Mammary epithelial cell (primary cell): ENCODE measurements at regions of chr16 and their contacts with region 1.

Region 1: DNA sequence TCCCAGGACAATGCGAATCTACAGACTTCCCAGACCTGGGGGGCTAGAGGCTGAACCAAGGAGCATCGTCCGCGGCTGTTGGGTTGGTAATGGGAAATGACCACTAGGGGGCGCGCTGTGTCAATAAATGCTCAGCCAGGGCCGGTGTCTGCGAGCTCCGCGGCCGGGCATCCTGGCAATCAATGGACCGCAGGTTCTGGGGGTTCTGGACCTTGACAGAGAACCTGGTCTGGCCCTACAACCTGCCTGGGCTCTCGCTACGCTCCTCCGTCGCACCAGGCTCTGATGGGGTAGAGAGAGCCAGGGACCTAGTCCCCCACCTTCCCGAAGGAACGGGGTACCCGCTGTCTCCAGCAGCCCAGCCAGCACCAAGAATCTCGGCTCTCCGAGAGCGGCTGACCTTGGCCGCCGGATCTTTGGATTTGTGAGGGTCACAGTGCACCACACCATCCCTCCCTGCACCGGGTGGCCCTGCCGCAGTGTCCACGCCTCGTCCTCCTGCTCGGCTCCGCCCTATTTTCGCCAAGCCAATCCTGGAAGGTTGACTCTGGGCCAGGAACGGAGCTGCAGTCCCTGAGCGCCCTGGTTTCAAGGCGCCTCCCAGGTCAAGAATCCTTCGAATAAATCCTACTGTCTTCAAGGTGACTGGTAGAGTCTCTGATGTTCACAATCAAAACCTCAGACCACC is 20.4 kb upstream of the BEAN1 start:
- DNase-seq: peak; percentile 68
- H3K4me3 ChIP-seq: peak overlapping the region; percentile 40 to 60 (median 58)
- H3K27ac ChIP-seq: peak overlapping the region; percentile 98
- H3K4me1 ChIP-seq: peaks cover 23% of the 10 kb centered on the region
- H3K27me3 ChIP-seq: no peaks in the 10 kb centered on the region
- CTCF ChIP-seq: peak; percentile 82 to 83

Region 2: GRCh38 chr16:66357153-66357928 is 49.3 kb before region 1 on chr16:
- CTCF ChIA-PET with region 1: no interaction called
- dilution Hi-C with region 1: no loop called
- in situ Hi-C with region 1: no loop called
- intact Hi-C with region 1: loop called (anchors 2 kb)
- DNase-seq: peak; percentile 74
- H3K4me3 ChIP-seq: no peak overlapping the region
- H3K27ac ChIP-seq: no peak overlapping the region
- H3K4me1 ChIP-seq: peaks cover 11% of the 10 kb centered on the region
- H3K27me3 ChIP-seq: peaks cover 3% of the 10 kb centered on the region
- CTCF ChIP-seq: peak; percentile 72 to 82

Region 3: DNA sequence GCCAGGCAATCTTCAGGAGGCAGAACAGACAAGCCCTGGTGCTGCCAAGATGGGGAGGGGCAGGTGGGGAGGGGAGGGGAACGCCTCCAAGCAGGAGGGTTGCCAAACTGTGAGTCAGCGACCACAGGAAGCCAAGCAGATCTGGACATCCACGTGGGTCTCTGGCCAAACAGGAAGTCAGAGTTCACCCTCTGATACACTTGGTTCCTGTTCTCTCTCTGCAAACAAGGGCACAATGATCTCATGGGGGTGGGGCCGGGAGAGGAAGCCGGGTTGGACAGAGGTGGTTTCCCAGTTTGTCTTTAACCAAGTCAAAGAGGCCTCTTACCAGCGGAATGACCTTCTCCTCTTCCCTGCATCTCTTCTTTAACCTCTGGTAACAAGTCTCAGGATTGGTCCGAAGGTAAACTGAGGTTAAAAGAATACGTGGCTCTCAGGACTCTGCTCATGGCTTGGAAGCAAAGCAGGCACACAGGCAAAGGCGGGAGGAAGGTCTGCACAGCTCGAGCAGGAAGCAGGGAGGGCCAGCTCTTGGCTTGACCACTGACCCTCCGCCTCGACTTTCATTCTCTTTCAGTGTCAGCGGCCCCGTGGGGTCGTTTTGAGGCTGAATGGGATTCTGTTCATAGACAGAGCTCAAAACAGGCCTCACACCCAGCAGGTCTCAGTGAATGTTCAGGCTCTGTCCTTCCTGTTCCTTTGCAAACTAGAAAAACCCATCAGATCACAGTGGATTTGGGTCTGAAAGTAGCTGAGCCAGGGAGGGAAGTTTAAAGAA is 110.3 kb after region 1 on chr16:
- CTCF ChIA-PET with region 1: interaction called, 5 read pairs
- dilution Hi-C with region 1: no loop called
- in situ Hi-C with region 1: no loop called
- intact Hi-C with region 1: loop called (anchors 1 kb)
- DNase-seq: peak; percentile 97
- H3K4me3 ChIP-seq: no peak overlapping the region
- H3K27ac ChIP-seq: peak overlapping the region; percentile 72
- H3K4me1 ChIP-seq: peaks cover 63% of the 10 kb centered on the region
- H3K27me3 ChIP-seq: no peaks in the 10 kb centered on the region
- CTCF ChIP-seq: no peak

Region 4: GRCh38 chr16:66580605-66581209 is 174.0 kb after region 1 on chr16:
- CTCF ChIA-PET with region 1: no interaction called
- dilution Hi-C with region 1: loop called (anchors 5 kb)
- in situ Hi-C with region 1: no loop called
- intact Hi-C with region 1: loop called (anchors 2 kb)
- DNase-seq: peak; percentile 64
- H3K4me3 ChIP-seq: no peak overlapping the region
- H3K27ac ChIP-seq: no peak overlapping the region
- H3K4me1 ChIP-seq: peaks cover 21% of the 10 kb centered on the region
- H3K27me3 ChIP-seq: no peaks in the 10 kb centered on the region
- CTCF ChIP-seq: peak; percentile 23 to 35

Region 5: DNA sequence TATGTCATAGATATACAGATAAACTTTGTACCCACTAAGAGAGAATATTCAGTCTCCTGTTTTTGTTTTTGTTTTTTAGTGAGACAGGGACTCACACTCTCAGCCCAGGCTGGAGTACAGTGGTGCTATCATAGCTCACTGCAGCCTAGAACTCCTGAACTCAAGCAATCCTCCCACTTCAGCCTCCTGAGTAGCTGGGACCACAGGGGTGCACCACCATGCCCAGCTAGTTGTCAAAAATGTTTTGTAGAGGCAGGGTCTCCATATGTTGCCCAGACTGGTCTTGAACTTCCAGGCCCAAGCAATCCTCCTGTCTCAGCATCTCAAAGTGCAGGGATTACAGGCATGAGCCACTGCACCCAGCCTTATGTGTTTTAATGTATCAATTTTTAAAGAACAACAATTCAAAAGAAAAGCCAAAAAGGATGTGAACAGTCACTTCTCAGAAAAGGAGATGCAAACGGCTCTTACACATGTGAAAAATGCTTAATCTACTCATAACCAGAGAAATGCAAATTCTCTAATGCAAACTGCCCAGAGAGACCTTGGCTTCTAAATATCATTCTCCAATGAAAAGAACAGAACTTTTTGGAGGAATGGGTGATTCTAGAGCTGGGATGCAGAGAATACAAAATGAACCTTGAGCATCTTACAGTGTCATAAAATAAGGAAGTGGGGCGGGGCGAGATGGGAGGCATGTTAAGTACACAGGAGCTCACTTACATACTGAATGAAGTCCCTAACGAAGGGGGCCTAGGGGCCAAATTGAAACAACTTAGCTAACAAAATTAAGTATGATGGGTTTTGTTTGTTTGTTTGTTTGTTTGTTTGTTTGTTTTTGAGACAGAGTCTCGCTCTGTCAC is 190.5 kb after region 1 on chr16:
- CTCF ChIA-PET with region 1: no interaction called
- dilution Hi-C with region 1: no loop called
- in situ Hi-C with region 1: loop called (anchors 5 to 10 kb)
- intact Hi-C with region 1: no loop called
- DNase-seq: no peak
- H3K4me3 ChIP-seq: no peak overlapping the region
- H3K27ac ChIP-seq: no peak overlapping the region
- H3K4me1 ChIP-seq: no peaks in the 10 kb centered on the region
- H3K27me3 ChIP-seq: no peaks in the 10 kb centered on the region
- CTCF ChIP-seq: no peak

Region 6: GRCh38 chr16:66660422-66661209 is 253.9 kb after region 1 on chr16:
- CTCF ChIA-PET with region 1: no interaction called
- dilution Hi-C with region 1: no loop called
- in situ Hi-C with region 1: no loop called
- intact Hi-C with region 1: loop called (anchors 5 kb)
- DNase-seq: peak; percentile 85
- H3K4me3 ChIP-seq: no peak overlapping the region
- H3K27ac ChIP-seq: peak overlapping the region; percentile 74
- H3K4me1 ChIP-seq: peaks cover 42% of the 10 kb centered on the region
- H3K27me3 ChIP-seq: no peaks in the 10 kb centered on the region
- CTCF ChIP-seq: peak in 1 of 2 donors; percentile 39

Region 7: DNA sequence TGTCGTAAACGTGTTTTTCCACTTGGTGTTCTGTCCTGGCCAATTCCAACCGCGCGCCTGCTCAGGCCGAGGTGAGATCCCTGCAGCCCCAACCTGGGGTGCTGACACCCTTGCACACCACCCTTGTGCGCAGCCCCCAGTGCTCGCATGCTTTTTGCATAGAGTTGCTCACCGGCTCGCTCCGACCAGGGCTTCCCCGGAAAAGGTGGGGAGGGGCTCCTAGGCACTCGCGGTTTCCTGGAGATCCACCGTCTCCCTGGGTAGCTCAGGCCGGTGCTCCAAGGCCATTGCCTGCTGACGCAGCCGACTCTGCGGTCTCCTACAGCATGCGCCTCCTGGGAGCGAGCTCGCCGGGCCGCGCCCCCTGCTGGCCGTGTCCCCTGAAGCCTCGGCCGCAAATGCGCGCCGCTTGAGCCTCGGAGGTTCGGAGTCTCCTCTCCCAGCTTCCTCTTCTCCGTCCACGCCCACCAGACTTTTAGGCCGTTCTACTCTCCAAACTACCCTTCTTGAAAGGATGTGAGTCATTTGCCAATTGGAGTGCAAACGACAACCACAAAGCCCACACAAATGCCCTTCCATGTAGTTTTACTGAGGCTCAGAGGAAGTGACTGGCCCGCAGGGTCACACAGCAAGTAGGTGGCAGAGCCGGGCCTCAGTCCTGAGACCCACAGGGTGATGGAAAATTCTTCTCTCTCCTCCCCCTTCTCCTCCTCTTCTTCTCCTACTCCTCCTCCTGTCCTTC is 466.4 kb after region 1 on chr16:
- CTCF ChIA-PET with region 1: interaction called, 6 read pairs
- dilution Hi-C with region 1: no loop called
- in situ Hi-C with region 1: loop called in 1 of 2 experiments (anchors 25 kb)
- intact Hi-C with region 1: loop called (anchors 1 kb)
- DNase-seq: peak; percentile 100
- H3K4me3 ChIP-seq: peak overlapping the region in 2 of 3 experiments; percentile 32 to 42
- H3K27ac ChIP-seq: no peak overlapping the region
- H3K4me1 ChIP-seq: peaks cover 14% of the 10 kb centered on the region
- H3K27me3 ChIP-seq: no peaks in the 10 kb centered on the region
- CTCF ChIP-seq: peak; percentile 87 to 95